CD4-positive, alpha-beta memory T cell (primary cell): ENCODE measurements at regions of chr19 and their contacts with region 1.

Region 1: DNA sequence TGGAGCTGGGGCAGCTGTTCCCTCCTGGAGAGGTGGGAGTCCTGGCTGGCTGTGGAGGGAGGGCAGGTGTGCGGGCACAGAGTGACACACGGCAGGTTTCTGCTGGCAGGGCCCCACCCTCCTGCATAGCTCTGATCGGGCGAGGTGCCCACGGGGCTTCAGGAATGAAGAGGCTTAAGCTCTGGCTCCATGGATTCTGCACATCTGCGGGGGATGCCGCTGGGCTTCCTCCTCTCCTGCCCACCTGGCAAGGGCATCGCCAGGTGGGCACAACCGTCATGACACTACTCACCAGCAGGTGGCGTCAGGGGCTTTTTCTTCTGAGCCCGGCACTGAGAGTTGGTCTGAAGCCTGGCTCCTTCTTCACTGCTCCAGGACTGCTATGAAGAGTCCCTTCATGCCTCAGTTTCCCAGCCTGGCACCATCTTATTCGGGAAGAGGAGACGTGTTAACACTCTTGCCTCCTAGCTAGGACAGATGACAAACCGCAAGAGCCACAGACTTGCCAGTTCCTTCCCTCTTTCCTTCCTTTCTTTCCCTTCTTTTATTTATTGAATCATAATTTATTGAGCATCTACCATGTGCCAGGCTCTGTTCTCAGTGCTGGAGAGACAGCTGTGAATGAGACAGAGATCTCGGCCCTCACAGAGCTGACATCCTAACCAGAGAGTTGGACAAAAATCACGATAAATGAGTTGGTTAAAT is 15.2 kb upstream of the PAK4 start:
- DNase-seq: peak; percentile 43 to 61 (median 61)
- H3K4me3 ChIP-seq: no peak overlapping the region
- H3K4me3 Mint-ChIP-seq: no peak overlapping the region
- H3K27ac ChIP-seq: no peak overlapping the region
- H3K27ac Mint-ChIP-seq: peak overlapping the region in 3 of 7 donors; percentile 2 to 80 (median 42)
- H3K4me1 ChIP-seq: no peaks in the 10 kb centered on the region
- H3K4me1 Mint-ChIP-seq: peaks cover 0 to 4% (median 3%) of the 10 kb centered on the region in 4 donors
- H3K27me3 ChIP-seq: no peaks in the 10 kb centered on the region
- H3K27me3 Mint-ChIP-seq: peaks cover 3% of the 10 kb centered on the region in 2 donors

Region 2: GRCh38 chr19:39031368-39032062 is 78.9 kb before region 1 on chr19:
- CTCF ChIA-PET with region 1: no interaction called
- POLR2A ChIA-PET with region 1: no interaction called
- intact Hi-C with region 1: no loop called
- DNase-seq: peak; percentile 64 to 84 (median 66)
- H3K4me3 ChIP-seq: peak overlapping the region; percentile 46 to 47
- H3K4me3 Mint-ChIP-seq: peak overlapping the region; percentile 63 to 86 (median 78)
- H3K27ac ChIP-seq: no peak overlapping the region
- H3K27ac Mint-ChIP-seq: peak overlapping the region in 5 of 7 donors; percentile 8 to 55 (median 22)
- H3K4me1 ChIP-seq: peaks cover 11% of the 10 kb centered on the region
- H3K4me1 Mint-ChIP-seq: peaks cover 0 to 11% (median 5%) of the 10 kb centered on the region in 4 donors
- H3K27me3 ChIP-seq: no peaks in the 10 kb centered on the region
- H3K27me3 Mint-ChIP-seq: peaks cover 0 to 1% of the 10 kb centered on the region in 2 donors

Region 3: DNA sequence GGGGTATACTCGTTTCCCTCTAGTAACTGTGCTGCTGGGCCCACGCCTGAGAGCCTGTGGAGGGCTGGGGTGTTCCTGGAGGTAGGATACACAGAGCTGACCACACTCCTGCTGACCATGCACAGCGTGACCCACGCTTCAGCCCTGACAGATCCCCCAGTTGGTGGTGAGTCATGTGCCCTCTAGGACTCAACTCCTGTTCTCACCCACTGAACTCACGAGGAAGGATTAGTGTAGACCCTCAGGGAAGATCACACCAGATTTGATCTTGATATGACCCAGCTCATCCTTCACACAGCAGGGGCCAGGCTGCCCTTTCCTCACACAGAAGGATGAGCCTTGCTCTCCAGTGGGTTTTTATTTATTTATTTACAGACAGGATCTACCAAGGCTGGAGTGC is 39.5 kb before region 1 on chr19:
- CTCF ChIA-PET with region 1: interaction called, 6 read pairs
- POLR2A ChIA-PET with region 1: interaction called, 4 read pairs
- intact Hi-C with region 1: loop called (anchors 5 kb)
- DNase-seq: no peak
- H3K4me3 ChIP-seq: no peak overlapping the region
- H3K4me3 Mint-ChIP-seq: no peak overlapping the region
- H3K27ac ChIP-seq: no peak overlapping the region
- H3K27ac Mint-ChIP-seq: peak overlapping the region in 4 of 7 donors; percentile 46 to 70 (median 54)
- H3K4me1 ChIP-seq: peaks cover 21% of the 10 kb centered on the region
- H3K4me1 Mint-ChIP-seq: peaks cover 20 to 34% (median 25%) of the 10 kb centered on the region in 4 donors
- H3K27me3 ChIP-seq: no peaks in the 10 kb centered on the region
- H3K27me3 Mint-ChIP-seq: peaks cover 0 to 1% of the 10 kb centered on the region in 2 donors